Activated CD4-positive, alpha-beta memory T cell treated with anti-CD3 and anti-CD28 coated beads, Interleukin-2, amount 10 ng/mL, durations not matched to agents 7 days and 5 days (primary cell): ENCODE measurements at regions of chr1 and their contacts with region 1.

Region 1: DNA sequence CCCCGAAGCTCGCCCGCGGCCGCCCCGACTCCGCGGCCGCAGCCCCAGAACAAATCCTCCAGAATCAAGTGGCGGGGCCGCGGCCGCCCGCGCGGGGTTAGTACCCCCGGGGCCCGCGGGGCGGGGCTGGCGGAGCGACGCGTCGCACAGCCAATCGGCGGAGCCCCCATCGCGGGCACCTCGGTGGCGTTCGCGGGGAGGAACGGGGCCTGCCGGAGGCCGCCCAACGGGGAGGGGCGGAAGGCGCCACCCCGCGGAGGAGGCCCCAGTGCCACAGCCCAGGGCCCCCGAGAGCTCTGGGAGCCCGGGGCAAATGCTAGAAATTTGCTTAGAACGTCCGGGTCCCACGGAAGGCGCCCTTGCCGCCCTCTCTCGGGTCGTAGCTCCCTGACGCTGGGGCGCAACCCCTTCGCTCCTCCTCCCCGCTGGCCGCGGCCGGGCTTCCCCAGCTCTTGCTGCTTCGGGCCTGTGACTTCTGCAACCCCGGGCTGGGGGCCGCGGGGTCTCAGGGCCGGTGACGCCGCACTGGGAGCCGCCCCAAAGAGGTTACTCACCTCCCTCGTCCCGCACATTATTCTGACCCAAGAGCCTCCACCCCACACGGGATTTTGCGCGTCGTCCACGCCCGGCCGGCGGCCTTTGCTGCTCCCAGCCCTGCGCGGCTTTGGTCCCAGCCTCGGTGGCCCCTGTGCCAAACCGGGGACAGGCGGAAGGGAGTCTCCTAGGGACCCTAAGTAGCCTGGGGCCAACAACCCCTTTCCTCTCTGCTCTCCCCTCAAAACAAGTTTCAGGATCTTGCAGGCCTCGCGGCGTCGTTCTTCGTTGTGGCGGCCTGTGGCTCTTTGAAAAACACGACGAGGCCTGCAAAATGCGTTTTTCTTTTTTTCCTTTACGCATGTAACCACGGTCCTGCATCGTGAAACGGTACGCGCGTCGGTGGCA is at the start of gene RUNX3:
- DNase-seq: peak; percentile 94
- H3K4me3 Mint-ChIP-seq: peak within 1 kb of the TSS; percentile 81
- H3K27ac Mint-ChIP-seq: peak within 1 kb of the TSS; percentile 80
- H3K4me1 Mint-ChIP-seq: peaks cover 65% of the 10 kb centered on the region
- H3K27me3 Mint-ChIP-seq: no peaks in the 10 kb centered on the region
- total RNA-seq, gene RUNX3: 177 to 183 TPM

Region 2: DNA sequence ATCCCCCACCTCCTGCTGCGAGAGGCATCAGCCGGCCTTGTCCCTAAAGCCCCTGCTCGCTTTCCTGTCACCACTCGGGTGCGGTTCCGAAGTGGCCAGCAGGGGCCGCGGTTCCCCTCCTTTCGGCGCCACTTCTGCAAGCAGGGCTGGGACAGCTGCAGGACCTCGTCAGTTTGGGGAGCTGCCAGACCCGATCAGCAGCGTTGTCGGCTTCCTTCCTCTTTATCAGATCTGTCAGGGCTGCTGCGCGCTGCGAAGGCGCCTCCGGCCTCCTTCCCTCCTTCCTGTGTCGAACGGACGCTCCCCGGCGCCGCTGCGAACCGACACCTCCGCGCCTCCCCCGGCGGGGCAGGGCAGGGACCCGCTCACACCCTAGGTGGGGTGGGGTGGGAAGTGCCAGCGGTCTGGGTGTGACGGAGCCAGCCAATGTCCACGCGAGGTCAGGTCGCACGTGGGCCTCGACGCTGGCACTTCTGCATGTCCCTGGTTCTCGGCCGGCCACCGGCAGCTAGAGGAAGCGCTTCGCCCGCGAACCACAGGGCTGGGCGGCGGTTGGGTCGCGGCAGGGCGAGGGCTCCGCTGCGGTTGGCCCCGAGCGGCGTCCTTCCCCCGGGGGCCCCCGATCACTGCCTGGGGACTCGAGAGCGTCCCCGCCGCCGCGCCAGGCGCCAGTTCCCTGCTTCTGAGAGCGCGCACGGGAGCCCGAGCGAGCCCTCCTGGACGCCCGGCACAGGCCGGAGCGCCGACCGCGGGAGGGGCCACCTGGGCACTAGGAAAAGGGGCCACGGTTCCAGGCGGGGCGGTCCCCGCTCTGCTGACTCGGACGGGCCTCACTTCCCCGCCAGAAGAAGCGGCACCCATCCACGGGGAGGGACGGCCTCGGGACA is 82.2 kb before region 1 on chr1:
- CTCF ChIA-PET with region 1: interaction called, 10 read pairs
- POLR2A ChIA-PET with region 1: interaction called, 6 read pairs
- DNase-seq: peak; percentile 91
- H3K4me3 Mint-ChIP-seq: peak overlapping the region; percentile 61
- H3K27ac Mint-ChIP-seq: peak overlapping the region; percentile 52
- H3K4me1 Mint-ChIP-seq: peaks cover 26% of the 10 kb centered on the region
- H3K27me3 Mint-ChIP-seq: peaks cover 26% of the 10 kb centered on the region

Region 3: GRCh38 chr1:24919791-24920532 is 10.5 kb before region 1 on chr1:
- CTCF ChIA-PET with region 1: interaction called, 4 read pairs
- POLR2A ChIA-PET with region 1: interaction called, 128 read pairs
- DNase-seq: peak; percentile 75
- H3K4me3 Mint-ChIP-seq: peak overlapping the region; percentile 26
- H3K27ac Mint-ChIP-seq: peak overlapping the region; percentile 85
- H3K4me1 Mint-ChIP-seq: peaks cover 92% of the 10 kb centered on the region
- H3K27me3 Mint-ChIP-seq: no peaks in the 10 kb centered on the region

Region 4: GRCh38 chr1:24955161-24955560 is 24.7 kb after region 1 on chr1:
- CTCF ChIA-PET with region 1: interaction called, 22 read pairs
- POLR2A ChIA-PET with region 1: interaction called, 105 read pairs
- DNase-seq: peak; percentile 88
- H3K4me3 Mint-ChIP-seq: peak overlapping the region; percentile 75
- H3K27ac Mint-ChIP-seq: peak overlapping the region; percentile 96
- H3K4me1 Mint-ChIP-seq: peaks cover 96% of the 10 kb centered on the region
- H3K27me3 Mint-ChIP-seq: no peaks in the 10 kb centered on the region

Region 5: DNA sequence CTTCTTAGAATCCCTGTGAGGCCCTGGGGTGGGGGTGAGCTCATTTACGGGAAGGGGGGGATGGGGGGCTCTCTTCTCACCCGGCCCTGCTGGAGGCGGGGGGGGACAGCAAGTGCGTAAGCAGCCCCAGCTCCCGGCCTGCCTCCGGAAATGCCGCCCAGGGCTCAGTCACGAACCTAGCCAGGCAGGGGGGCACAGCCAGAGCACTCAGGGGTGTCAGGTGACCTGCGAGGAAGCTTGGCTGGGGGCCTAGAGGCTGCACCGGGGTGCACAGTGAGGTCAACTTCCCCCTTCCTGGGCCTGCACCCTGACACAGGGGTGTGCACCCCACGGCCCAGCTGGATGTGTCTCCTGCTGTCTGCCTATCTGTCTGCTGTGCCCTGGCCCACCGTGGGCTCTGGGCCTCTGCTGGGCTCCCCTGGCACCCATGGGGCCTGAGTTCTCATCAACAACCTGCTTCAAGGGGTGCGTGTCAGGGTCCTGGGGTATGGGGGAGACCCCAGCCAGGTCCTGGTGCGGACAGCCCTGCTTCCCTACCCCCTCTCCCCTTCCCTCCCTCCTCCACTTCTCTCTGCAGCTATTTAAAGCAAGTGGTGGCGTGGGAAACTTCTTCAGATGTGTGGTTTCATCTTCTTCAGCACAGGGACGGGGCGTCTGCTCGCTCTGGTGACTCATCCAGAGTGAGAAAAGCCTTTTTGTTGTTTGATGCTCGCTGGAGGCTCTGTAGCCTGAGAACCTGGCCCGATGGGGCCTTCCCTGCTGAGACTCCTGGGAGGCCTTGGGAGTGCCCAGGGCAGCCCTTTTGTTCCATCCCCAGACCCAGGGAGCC is 92.1 kb after region 1 on chr1:
- CTCF ChIA-PET with region 1: interaction called, 11 read pairs
- POLR2A ChIA-PET with region 1: interaction called, 31 read pairs
- DNase-seq: peak; percentile 96
- H3K4me3 Mint-ChIP-seq: peak overlapping the region; percentile 73
- H3K27ac Mint-ChIP-seq: peak overlapping the region; percentile 97
- H3K4me1 Mint-ChIP-seq: peaks cover 96% of the 10 kb centered on the region
- H3K27me3 Mint-ChIP-seq: no peaks in the 10 kb centered on the region

Region 6: DNA sequence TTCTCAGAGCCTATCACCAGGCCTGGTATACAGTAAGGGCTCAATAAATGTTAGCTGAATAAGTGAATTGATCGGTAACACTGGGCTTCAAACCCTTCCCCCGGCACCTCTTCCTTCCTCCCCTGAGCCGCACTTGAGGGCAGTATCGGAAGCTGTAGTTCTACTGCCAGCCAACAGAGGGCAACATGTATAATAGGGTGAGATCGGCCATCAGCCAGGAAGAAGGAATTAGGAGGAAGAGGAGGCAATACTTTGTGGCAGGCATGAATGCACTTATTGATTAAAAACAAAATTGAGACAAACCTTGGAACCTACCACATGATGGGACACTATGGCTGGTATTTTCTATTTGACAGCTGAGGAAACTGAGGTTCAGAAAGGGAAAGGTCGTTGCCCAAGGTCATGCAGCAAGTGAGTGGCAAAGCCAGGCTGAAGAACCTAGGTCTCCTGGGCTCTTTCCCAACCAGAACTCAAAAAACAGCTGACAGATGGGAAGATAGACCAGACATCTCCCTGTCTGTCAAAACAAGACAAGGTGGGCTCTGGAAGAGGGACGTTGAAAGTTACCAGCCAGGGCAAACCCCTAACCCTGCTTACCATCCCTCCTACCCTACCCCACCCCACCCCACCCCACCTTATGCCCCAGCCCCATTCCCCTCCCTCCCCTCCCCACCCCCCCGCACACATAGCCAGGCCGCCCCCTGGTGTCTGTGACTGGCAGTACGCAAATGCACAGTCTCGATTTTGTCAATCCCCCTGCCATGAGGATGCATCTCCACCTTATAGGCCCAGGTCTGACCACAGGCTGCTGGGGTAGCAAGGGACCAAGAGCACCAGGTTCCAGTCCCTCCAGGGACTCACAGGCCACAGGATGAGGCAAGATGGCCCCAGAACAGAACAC is 106.9 kb after region 1 on chr1:
- CTCF ChIA-PET with region 1: interaction called, 55 read pairs
- POLR2A ChIA-PET with region 1: interaction called, 44 read pairs
- DNase-seq: peak; percentile 75
- H3K4me3 Mint-ChIP-seq: no peak overlapping the region
- H3K27ac Mint-ChIP-seq: peak overlapping the region; percentile 38
- H3K4me1 Mint-ChIP-seq: peaks cover 28% of the 10 kb centered on the region
- H3K27me3 Mint-ChIP-seq: peaks cover 20% of the 10 kb centered on the region